CD14-positive monocyte (primary cell): ENCODE measurements at regions of chr10 and their contacts with region 1.

Region 1: DNA sequence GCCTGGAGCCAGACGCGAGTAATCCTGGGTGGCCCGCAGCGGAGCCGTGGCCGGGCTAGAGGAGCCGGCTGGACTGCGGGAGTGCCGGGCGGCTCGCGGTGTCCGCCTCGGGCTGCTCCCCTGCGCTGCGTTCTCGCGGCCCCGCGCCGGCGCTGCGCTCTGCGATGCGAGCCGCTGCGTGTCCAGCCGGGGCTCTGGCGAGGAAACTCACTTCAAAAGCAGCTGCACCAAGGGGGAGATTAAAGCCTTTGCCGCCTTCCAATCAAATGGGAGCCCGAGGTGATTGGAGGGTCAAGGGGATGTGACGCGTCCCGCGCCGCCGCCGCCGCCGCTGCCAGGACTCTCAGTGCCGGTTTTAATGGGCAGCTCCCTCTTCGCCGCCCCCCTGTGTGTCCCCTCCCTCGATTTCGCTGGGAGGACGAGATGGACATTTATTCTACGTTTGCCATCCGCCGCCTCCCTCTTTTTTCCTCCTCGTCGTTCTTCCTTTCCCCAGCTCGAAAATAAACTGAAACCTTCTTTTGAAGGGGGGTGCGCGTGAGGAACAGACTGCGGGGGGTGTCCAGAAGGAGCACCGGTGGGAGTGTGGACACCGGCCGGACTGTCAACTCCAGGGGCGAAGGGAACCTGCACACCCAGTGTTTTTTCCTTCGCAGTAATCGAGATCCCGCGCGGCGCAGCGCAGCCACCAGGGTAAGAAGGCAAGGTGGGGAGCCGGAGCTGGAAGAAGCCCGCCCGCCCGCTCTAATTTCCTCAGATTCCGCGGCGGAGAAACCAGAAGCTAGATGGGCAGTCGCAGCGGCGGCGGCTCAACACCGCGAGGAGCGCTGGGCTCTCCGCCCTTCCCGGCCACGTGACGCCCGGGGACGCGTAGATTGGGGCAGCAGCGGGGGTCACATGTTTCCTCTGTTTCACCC is at the start of gene ZNF503:
- DNase-seq: peak; percentile 82 to 87 (median 86)
- H3K4me3 ChIP-seq: peak within 1 kb of the TSS; percentile 81 to 100 (median 83)
- H3K4me3 Mint-ChIP-seq: peak within 1 kb of the TSS; percentile 97 to 98
- H3K27ac ChIP-seq: peak within 1 kb of the TSS; percentile 85 to 94
- H3K27ac Mint-ChIP-seq: peak within 1 kb of the TSS; percentile 90 to 98 (median 96)
- H3K4me1 ChIP-seq: peaks cover 41 to 62% of the 10 kb centered on the region in 2 donors
- H3K4me1 Mint-ChIP-seq: peaks cover 37% of the 10 kb centered on the region
- H3K27me3 ChIP-seq: peaks cover 40 to 58% of the 10 kb centered on the region in 2 donors
- H3K27me3 Mint-ChIP-seq: peaks cover 51 to 66% (median 57%) of the 10 kb centered on the region in 3 donors
- CTCF ChIP-seq: peak; percentile 2
- polyA plus RNA-seq, gene ZNF503: 0.65 to 7.2 (median 1.3) TPM

Region 2: GRCh38 chr10:75430000-75430763 is 28.4 kb after region 1 on chr10:
- intact Hi-C with region 1: loop called in 1 of 2 experiments (anchors 1 kb)
- DNase-seq: peak; percentile 66 to 82 (median 78)
- H3K4me3 ChIP-seq: peak overlapping the region in 1 of 3 experiments; percentile 87
- H3K4me3 Mint-ChIP-seq: peak overlapping the region; percentile 57 to 77
- H3K27ac ChIP-seq: peak overlapping the region; percentile 30 to 95
- H3K27ac Mint-ChIP-seq: peak overlapping the region; percentile 41 to 91 (median 84)
- H3K4me1 ChIP-seq: peaks cover 72 to 85% of the 10 kb centered on the region in 2 donors
- H3K4me1 Mint-ChIP-seq: peaks cover 75% of the 10 kb centered on the region
- H3K27me3 ChIP-seq: no peaks in the 10 kb centered on the region
- H3K27me3 Mint-ChIP-seq: no peaks in the 10 kb centered on the region
- CTCF ChIP-seq: no peak

Region 3: GRCh38 chr10:75612904-75613684 is 211.3 kb after region 1 on chr10:
- intact Hi-C with region 1: loop called (anchors 2 to 10 kb)
- DNase-seq: peak; percentile 77 to 87 (median 85)
- H3K4me3 ChIP-seq: peak overlapping the region in 1 of 3 experiments; percentile 61
- H3K4me3 Mint-ChIP-seq: peak overlapping the region; percentile 42 to 79
- H3K27ac ChIP-seq: peak overlapping the region; percentile 14 to 79
- H3K27ac Mint-ChIP-seq: peak overlapping the region; percentile 83 to 95 (median 91)
- H3K4me1 ChIP-seq: peaks cover 63 to 79% of the 10 kb centered on the region in 2 donors
- H3K4me1 Mint-ChIP-seq: peaks cover 74% of the 10 kb centered on the region
- H3K27me3 ChIP-seq: no peaks in the 10 kb centered on the region
- H3K27me3 Mint-ChIP-seq: no peaks in the 10 kb centered on the region
- CTCF ChIP-seq: no peak

Region 4: DNA sequence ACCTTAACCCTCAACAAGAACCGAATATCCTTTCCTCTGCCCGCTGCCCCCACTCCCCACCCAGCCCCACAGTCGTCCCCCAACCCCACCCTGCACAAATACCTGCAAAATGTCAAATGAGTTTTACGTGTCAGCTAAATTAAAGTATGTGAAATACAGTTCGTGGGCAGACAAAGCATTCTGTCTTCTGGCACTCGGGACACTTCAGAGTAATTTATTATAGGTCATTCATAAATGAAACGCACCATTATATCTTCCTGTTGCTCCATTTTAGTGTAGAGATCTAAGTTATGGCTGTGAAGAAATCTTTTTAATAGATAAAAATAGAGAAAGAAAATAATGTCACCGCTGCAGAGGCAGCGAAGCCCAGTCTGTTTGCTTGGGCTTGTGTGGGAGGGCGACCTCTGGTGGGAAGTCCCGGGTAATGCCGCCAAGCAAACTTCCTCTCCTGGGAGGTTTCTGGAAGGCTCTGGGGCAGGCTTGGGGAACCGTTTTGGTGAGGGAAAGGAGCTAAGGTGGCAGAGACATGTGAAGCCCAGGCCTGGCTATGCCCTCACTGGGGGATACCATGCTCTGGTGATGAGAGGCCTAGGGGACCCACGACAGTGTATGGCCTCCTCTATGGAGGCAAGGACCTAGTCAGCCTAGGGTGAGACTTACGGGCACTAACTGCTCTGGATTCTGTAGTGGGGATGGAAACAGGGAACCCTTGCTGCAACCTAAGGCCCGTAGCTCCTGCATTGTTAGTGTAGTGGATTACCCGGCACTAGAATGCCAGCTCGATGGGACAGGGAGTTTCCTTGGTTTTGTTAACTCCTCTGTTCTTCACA is 634.5 kb after region 1 on chr10:
- intact Hi-C with region 1: loop called (anchors 5 to 10 kb)
- DNase-seq: peak; percentile 48 to 54 (median 54)
- H3K4me3 ChIP-seq: no peak overlapping the region
- H3K4me3 Mint-ChIP-seq: peak overlapping the region in 1 of 2 donors; percentile 53
- H3K27ac ChIP-seq: no peak overlapping the region
- H3K27ac Mint-ChIP-seq: peak overlapping the region in 1 of 7 donors; percentile 53
- H3K4me1 ChIP-seq: peaks cover 7 to 8% of the 10 kb centered on the region in 2 donors
- H3K4me1 Mint-ChIP-seq: peaks cover 16% of the 10 kb centered on the region
- H3K27me3 ChIP-seq: no peaks in the 10 kb centered on the region
- H3K27me3 Mint-ChIP-seq: peaks cover 0 to 5% (median 2%) of the 10 kb centered on the region in 3 donors
- CTCF ChIP-seq: peak; percentile 90